ENCODE measurements at regions of chr6 and their contacts with region 1.

Region 1: DNA sequence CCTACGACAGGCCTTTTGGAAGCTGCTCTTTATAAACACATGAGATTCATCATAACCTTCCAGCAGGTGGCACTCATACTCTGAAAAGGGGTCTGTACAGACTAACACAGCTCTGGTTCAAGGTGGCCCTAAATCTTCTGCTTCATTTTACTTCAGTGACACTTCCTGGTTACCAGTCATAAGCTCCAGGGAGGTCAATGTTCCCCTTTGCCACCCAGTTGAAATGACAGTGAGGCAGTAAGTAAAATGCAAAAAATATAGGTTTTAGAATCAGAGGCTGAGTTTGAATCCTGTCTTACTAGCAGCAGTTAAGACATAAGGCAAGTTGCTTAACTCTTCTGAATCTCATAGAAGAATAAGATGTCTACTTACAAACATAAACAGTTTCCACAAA is 132.8 kb downstream of the CDK19 start:
- DNase-seq: peak; percentile 83
- ATAC-seq: peak; percentile 99
- H3K4me3 Mint-ChIP-seq: no peak overlapping the region
- H3K27ac Mint-ChIP-seq: peak overlapping the region; percentile 46
- H3K4me1 Mint-ChIP-seq: peaks cover 18% of the 10 kb centered on the region
- H3K27me3 Mint-ChIP-seq: no peaks in the 10 kb centered on the region

Region 2: DNA sequence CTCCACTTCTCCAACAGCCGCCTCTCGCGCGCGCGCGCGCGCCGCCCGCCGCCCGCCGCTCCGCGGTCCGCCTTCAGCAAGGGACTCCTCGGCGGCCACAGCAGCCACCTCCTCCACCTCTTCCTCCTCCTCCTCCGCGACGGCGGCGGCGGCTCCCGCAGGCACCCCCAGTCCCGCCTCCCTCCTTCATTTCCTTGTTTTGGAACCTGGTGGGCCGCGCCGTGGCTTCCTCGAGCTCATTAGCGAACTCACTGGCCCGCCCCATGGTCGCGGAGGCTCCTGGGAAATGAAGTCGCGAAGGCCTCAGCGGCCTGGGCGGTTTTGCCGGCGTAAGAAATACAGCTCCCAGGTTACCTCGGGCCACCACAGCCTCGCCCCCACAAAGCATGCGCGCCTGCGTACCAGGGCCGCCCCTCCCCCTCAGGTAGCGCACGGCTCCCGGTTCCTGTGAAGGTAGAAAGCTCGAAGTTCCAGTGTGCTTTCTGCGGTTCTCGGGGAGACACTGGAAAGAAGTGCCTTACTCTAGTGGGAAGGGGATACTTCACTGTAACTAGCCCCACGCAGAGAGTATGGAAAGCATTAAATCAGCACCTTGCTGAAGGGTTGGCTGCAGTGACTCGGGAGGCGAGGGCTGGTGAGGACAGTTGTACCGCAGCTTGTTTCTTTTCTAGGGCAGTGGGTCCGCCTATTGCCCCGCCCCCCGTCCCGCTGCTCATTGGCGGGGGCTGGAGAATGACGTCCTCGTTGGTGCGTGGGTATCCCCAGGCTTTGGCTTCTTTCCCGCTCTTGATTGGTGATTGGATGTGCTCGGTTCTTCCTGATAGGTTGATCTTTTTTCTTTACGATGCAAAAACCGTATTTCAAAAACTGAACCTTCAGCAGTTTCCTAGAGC is 133.0 kb after region 1 on chr6 and contains the start of gene CDK19:
- CTCF ChIA-PET with region 1: interaction called, 11 read pairs
- DNase-seq: peak; percentile 99
- ATAC-seq: peak; percentile 83
- H3K4me3 Mint-ChIP-seq: peak within 1 kb of the TSS; percentile 97
- H3K27ac Mint-ChIP-seq: peak within 1 kb of the TSS; percentile 100
- H3K4me1 Mint-ChIP-seq: peaks cover 48% of the 10 kb centered on the region
- H3K27me3 Mint-ChIP-seq: no peaks in the 10 kb centered on the region
- total RNA-seq, gene CDK19: 27.8 to 29.4 TPM

Region 3: DNA sequence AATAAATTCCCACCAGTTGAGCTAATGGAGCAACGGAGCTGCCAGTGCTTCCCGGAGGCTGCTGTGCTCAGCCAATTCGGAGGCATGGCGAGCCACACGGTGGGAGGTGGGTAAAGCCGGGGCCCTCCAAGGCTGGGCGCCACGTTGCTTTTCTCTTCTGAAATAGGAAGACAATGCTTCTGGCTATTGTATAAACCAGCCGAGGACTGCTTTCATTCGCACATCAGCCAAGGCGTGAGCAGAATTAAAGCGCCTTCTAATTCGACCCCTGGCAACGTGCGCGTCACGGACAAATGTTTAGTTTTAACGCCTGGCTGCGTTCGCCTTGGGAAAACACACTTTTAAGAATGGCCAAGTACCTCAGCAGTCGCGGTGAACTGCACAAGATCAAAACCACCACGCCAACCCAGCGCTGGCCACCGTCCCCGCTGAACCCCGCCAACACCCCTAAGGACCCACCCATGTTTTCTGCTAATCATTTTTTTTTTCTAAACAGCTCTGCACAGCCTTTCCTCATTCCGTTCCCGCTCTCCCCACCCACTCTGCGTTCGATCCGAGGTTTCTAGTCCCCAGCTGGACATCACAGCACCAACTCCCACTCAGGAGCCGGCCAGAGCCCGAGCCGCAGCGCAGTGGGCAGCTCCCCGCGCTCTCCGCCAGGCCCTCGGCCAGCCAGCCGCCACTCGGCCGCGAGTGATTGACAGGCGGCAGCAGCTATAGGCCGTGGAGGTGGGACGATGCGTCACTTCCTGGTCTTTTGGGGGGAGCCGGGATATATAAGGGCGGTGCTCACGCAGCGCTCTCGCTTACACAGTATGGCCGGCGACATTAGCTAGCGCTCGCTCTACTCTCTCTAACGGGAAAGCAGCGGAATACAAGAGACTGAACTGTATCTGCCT is 191.8 kb after region 1 on chr6 and contains the start of gene AMD1:
- CTCF ChIA-PET with region 1: interaction called, 83 read pairs
- DNase-seq: peak; percentile 97
- ATAC-seq: peak; percentile 71
- H3K4me3 Mint-ChIP-seq: peak within 1 kb of the TSS; percentile 88
- H3K27ac Mint-ChIP-seq: peak within 1 kb of the TSS; percentile 99
- H3K4me1 Mint-ChIP-seq: peaks cover 28% of the 10 kb centered on the region
- H3K27me3 Mint-ChIP-seq: no peaks in the 10 kb centered on the region
- total RNA-seq, gene AMD1: 71.2 to 85.1 TPM

Region 4: DNA sequence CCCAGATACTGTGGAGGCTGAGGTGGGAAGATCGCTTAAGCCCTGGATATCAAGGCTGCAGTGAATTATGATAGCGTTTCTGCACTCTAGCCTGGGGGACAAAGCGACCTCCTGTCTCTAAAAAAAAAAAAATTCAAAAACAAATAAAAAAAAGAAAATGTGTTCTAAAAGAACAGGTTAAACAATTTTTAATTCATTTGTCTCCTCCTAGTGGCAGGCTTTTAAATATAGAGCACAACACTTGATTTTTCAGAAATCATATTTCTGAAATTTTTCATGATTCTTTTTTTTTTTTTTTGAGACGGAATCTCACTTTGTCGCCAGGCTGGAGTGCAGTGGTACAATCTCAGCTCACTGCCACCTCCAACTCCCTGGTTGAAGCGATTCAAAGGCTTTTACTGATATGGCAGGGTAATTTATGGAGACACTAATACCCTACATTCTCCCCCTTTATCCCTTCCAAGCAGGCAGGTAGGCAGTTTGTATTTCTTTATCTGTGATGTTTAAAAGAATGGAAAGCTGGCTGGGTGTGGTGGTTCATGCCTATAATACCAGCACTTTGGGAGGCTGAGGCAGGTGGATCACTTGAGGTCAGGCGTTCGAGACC is 267.3 kb after region 1 on chr6:
- CTCF ChIA-PET with region 1: interaction called, 55 read pairs
- DNase-seq: no peak
- ATAC-seq: no peak
- H3K4me3 Mint-ChIP-seq: no peak overlapping the region
- H3K27ac Mint-ChIP-seq: no peak overlapping the region
- H3K4me1 Mint-ChIP-seq: peaks cover 9% of the 10 kb centered on the region
- H3K27me3 Mint-ChIP-seq: peaks cover 11% of the 10 kb centered on the region

Region 5: DNA sequence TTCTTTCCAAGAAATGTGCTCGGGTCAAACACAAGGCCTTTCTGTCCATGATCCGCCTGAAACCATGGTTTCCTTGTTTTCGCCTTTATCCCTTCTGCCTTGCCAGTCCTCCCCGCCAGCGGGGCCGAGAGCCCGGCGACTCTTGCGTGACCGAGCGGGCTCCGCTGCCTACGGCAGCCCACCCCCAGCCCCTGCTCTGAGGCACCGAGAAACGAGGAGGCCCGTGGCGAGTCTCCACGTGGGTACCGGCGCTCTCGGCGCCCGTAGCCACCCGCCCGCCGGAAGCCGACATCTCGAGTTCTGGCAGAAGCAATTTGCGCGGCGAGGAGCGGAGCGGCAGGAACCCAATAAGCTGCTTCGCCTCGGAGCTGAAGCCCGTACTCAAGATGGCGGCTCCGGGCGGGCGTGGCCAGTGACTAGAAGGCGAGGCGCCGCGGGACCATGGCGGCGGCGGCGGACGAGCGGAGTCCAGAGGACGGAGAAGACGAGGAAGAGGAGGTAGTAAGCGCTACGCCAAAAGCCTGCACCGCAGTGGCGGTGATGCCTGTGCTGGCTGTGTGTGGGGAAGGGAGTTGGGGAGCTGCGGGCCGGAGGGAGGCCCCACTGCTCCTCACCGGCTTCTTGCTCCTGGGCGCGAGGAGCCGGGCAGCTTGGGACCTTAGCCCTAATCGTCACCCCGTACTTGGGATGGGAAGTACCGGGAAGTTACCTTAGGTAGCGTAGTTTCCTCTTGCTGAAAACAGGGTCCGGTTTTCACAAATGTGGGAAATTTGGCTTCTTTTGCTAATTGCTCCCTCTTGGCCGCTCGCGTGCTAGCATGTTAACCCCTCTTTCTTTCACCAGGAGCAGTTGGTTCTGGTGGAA is 276.1 kb after region 1 on chr6 and contains the start of gene GTF3C6:
- CTCF ChIA-PET with region 1: interaction called, 55 read pairs
- DNase-seq: peak; percentile 96
- ATAC-seq: peak; percentile 99
- H3K4me3 Mint-ChIP-seq: peak within 1 kb of the TSS; percentile 97
- H3K27ac Mint-ChIP-seq: peak within 1 kb of the TSS; percentile 99
- H3K4me1 Mint-ChIP-seq: peaks cover 16% of the 10 kb centered on the region
- H3K27me3 Mint-ChIP-seq: peaks cover 4% of the 10 kb centered on the region
- total RNA-seq, gene GTF3C6: 84.6 to 123 TPM